ENCODE measurements at regions of chr4 and their contacts with region 1.

Region 1: DNA sequence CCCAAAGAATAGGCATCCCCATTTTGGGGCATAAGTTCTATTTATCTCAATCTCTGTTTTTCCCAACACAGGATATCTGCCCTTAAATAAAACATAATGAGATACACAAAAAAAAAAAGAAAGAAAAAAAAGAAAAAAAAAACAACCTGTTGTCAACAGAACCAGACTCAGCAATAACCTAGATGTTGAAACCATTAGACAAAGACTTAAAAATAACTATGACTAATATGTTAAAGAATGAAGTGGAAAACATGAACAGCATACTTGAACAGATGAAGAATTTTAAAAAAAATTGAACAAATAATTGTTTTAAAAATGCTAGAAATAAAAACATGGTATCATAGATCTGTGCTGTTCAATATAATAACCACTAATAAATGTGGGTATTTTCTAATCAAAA is 93.4 kb upstream of the RXFP1 start:
- DNase-seq: peak; percentile 31
- ATAC-seq: no peak
- H3K4me3 ChIP-seq: no peak overlapping the region
- H3K27ac ChIP-seq: no peak overlapping the region
- H3K4me1 ChIP-seq: no peaks in the 10 kb centered on the region
- H3K27me3 ChIP-seq: no peaks in the 10 kb centered on the region
- CTCF ChIP-seq: no peak
- POLR2A ChIP-seq: no peak
- RAD21 ChIP-seq: no peak

Region 2: GRCh38 chr4:158327525-158327924 is 100.7 kb before region 1 on chr4:
- CTCF ChIA-PET with region 1: no interaction called
- POLR2A ChIA-PET with region 1: no interaction called
- dilution Hi-C with region 1: no loop called
- in situ Hi-C with region 1: no loop called
- intact Hi-C with region 1: no loop called
- DNase-seq: no peak
- ATAC-seq: no peak
- H3K4me3 ChIP-seq: no peak overlapping the region
- H3K27ac ChIP-seq: no peak overlapping the region
- H3K4me1 ChIP-seq: no peaks in the 10 kb centered on the region
- H3K27me3 ChIP-seq: no peaks in the 10 kb centered on the region
- CTCF ChIP-seq: no peak
- POLR2A ChIP-seq: no peak
- RAD21 ChIP-seq: no peak

Region 3: GRCh38 chr4:158542991-158543590 is 114.8 kb after region 1 on chr4:
- CTCF ChIA-PET with region 1: no interaction called
- POLR2A ChIA-PET with region 1: interaction called, 14 read pairs
- dilution Hi-C with region 1: no loop called
- in situ Hi-C with region 1: no loop called
- intact Hi-C with region 1: no loop called
- DNase-seq: no peak
- ATAC-seq: no peak
- H3K4me3 ChIP-seq: no peak overlapping the region
- H3K27ac ChIP-seq: no peak overlapping the region
- H3K4me1 ChIP-seq: no peaks in the 10 kb centered on the region
- H3K27me3 ChIP-seq: no peaks in the 10 kb centered on the region
- CTCF ChIP-seq: no peak
- POLR2A ChIP-seq: no peak
- RAD21 ChIP-seq: no peak

Region 4: DNA sequence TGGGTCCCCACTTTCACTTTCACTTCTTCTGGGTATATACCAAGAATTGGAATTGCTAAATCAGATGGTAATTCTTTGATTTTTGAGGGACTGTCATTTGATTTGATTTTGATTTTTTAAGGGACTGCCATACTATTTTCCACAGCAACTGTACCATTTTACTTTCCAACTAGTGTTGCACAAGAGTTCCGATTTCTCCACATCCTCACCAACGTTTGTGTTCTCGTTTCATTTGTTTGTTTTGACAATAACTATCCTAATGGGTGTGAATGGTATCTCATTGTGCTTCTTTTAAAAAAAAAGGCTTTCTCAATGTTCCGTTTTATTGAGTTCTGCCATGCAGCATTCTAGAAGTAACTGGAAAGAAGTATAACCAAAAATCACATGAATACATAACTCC is 180.9 kb after region 1 on chr4:
- CTCF ChIA-PET with region 1: no interaction called
- POLR2A ChIA-PET with region 1: no interaction called
- dilution Hi-C with region 1: no loop called
- in situ Hi-C with region 1: no loop called
- intact Hi-C with region 1: loop called (anchors 5 kb)
- DNase-seq: no peak
- ATAC-seq: no peak
- H3K4me3 ChIP-seq: no peak overlapping the region
- H3K27ac ChIP-seq: no peak overlapping the region
- H3K4me1 ChIP-seq: no peaks in the 10 kb centered on the region
- H3K27me3 ChIP-seq: no peaks in the 10 kb centered on the region
- CTCF ChIP-seq: no peak
- POLR2A ChIP-seq: no peak
- RAD21 ChIP-seq: no peak

Measured in IMR-90 (cell line).